B cell (primary cell): ENCODE measurements at regions of chr14 and their contacts with region 1.

Region 1: GRCh38 chr14:45267071-45267470 is 14.1 kb upstream of the MIS18BP1 start:
- DNase-seq: no peak
- ATAC-seq: no peak
- H3K4me3 ChIP-seq: no peak overlapping the region
- H3K4me3 Mint-ChIP-seq: no peak overlapping the region
- H3K27ac ChIP-seq: no peak overlapping the region
- H3K27ac Mint-ChIP-seq: no peak overlapping the region
- H3K4me1 ChIP-seq: no peaks in the 10 kb centered on the region
- H3K4me1 Mint-ChIP-seq: no peaks in the 10 kb centered on the region
- H3K27me3 ChIP-seq: no peaks in the 10 kb centered on the region
- H3K27me3 Mint-ChIP-seq: peaks cover 8% of the 10 kb centered on the region
- CTCF ChIP-seq: no peak

Region 2: DNA sequence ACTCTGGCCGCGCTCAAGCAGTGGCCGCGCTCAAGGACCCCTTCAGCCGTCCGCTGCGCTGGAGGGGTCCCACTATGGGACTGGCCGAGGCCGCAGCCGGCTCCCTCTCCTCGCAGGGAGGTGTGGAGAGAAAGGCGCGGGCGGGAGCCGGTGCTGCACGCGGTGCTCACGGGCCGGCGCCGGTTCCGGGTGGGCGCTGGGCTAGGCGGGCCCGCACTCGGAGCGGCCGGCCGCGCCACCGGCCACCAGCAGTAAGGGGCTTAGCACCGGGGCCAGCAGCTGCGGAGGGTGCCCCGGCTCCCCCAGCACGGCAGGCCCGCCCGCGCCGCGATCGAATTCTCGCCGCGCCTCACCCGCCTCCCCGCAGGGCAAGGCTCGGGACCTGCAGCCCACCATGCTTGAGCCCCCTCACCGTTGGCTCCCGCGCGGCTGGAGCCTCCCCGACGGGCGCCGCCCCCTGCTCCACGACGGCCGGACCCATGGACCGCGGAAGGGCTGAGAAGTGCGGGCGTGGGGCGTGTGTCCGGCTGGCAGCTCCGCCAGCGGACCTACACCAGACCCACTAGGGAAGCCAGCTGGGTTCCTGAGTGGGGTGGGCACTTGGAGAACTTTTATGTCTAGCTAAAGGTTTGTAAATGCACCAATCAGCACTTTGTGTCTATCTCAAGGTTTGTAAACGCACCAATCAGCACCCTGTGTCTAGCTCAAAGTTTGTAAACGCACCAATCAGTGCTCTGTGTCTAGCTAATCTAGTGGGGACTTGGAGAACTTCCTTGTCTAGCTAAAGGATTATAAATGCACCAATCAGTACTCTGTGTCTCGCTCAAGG is 354.8 kb before region 1 on chr14:
- CTCF ChIA-PET with region 1: interaction called, 26 read pairs
- POLR2A ChIA-PET with region 1: no interaction called
- intact Hi-C with region 1: loop called (anchors 1 kb)
- DNase-seq: peak; percentile 16
- ATAC-seq: no peak
- H3K4me3 ChIP-seq: no peak overlapping the region
- H3K4me3 Mint-ChIP-seq: peak overlapping the region; percentile 11
- H3K27ac ChIP-seq: no peak overlapping the region
- H3K27ac Mint-ChIP-seq: no peak overlapping the region
- H3K4me1 ChIP-seq: peaks cover 5 to 8% of the 10 kb centered on the region in 2 donors
- H3K4me1 Mint-ChIP-seq: peaks cover 4% of the 10 kb centered on the region
- H3K27me3 ChIP-seq: peaks cover 0 to 30% (median 22%) of the 10 kb centered on the region in 4 experiments
- H3K27me3 Mint-ChIP-seq: peaks cover 35% of the 10 kb centered on the region
- CTCF ChIP-seq: no peak

Region 3: GRCh38 chr14:45181329-45181728 is 85.7 kb before region 1 on chr14:
- CTCF ChIA-PET with region 1: no interaction called
- POLR2A ChIA-PET with region 1: no interaction called
- intact Hi-C with region 1: no loop called
- DNase-seq: no peak
- ATAC-seq: no peak
- H3K4me3 ChIP-seq: no peak overlapping the region
- H3K4me3 Mint-ChIP-seq: no peak overlapping the region
- H3K27ac ChIP-seq: no peak overlapping the region
- H3K27ac Mint-ChIP-seq: no peak overlapping the region
- H3K4me1 ChIP-seq: no peaks in the 10 kb centered on the region
- H3K4me1 Mint-ChIP-seq: peaks cover 2% of the 10 kb centered on the region
- H3K27me3 ChIP-seq: no peaks in the 10 kb centered on the region
- H3K27me3 Mint-ChIP-seq: no peaks in the 10 kb centered on the region
- CTCF ChIP-seq: no peak

Region 4: GRCh38 chr14:45227566-45227965 is 39.5 kb before region 1 on chr14:
- CTCF ChIA-PET with region 1: interaction called, 5 read pairs
- POLR2A ChIA-PET with region 1: no interaction called
- intact Hi-C with region 1: loop called (anchors 5 kb)
- DNase-seq: no peak
- ATAC-seq: no peak
- H3K4me3 ChIP-seq: no peak overlapping the region
- H3K4me3 Mint-ChIP-seq: no peak overlapping the region
- H3K27ac ChIP-seq: no peak overlapping the region
- H3K27ac Mint-ChIP-seq: no peak overlapping the region
- H3K4me1 ChIP-seq: no peaks in the 10 kb centered on the region
- H3K4me1 Mint-ChIP-seq: no peaks in the 10 kb centered on the region
- H3K27me3 ChIP-seq: no peaks in the 10 kb centered on the region
- H3K27me3 Mint-ChIP-seq: no peaks in the 10 kb centered on the region
- CTCF ChIP-seq: no peak